Dorsolateral prefrontal cortex (tissue), 120 donors: ENCODE measurements at regions of chr7 and their contacts with region 1.

Region 1: GRCh38 chr7:104983578-104984539 is 30.1 kb upstream of the KMT2E start:
- DNase-seq: peak; percentile 73 to 91 (median 87)
- H3K4me3 ChIP-seq: peak overlapping the region; percentile 56 to 90 (median 75)
- H3K27ac ChIP-seq: peak overlapping the region; percentile 81 to 100 (median 98)
- H3K27me3 ChIP-seq: no peaks in the 10 kb centered on the region
- CTCF ChIP-seq: peak in 55 of 56 donors; percentile 32 to 75 (median 56)

Region 2: DNA sequence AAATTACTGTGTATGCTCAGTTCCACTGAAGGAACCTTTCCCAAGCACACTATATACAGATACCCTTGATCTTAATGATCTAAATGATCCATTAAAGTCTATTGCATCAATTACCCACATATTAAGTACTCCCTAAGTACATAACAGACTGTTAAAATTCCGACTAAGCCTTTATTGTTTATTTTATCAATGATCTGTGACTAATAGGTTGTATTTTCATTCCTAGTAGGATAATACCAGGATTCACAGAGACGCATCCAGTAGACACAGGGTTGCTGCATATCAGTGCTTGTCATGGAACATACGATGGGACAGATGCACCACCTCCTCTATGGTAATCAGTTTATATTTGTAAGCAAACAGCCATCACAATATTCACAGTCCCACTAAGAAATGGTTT is 1378.2 kb before region 1 on chr7:
- intact Hi-C with region 1: no loop called
- DNase-seq: no peak
- H3K4me3 ChIP-seq: no peak overlapping the region
- H3K27ac ChIP-seq: no peak overlapping the region
- H3K27me3 ChIP-seq: peaks cover 0 to 8% (median 0%) of the 10 kb centered on the region in 45 donors
- CTCF ChIP-seq: no peak

Region 3: DNA sequence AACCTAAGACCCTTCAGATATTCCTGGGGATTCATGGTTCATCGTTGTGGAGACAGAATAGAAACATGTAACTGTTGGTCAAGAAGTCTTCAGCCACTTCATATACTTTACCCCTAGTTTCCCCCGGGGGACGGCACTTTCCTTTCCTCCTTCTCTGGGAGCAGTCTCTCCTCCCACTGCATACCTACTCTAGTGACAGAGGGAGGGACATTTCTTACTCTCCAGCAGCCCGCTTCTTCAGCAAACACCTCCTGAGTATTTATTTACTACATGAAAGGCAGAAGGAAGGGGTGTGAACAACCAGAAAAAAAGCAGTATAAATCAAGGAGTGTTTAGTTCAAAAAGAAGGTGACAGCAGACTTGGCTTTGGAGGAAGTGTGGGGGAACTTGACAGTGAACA is 586.4 kb before region 1 on chr7:
- intact Hi-C with region 1: no loop called
- DNase-seq: no peak
- H3K4me3 ChIP-seq: no peak overlapping the region
- H3K27ac ChIP-seq: no peak overlapping the region
- H3K27me3 ChIP-seq: peaks cover 0 to 16% (median 0%) of the 10 kb centered on the region in 45 donors
- CTCF ChIP-seq: no peak

Region 4: GRCh38 chr7:105013221-105013815 is 29.5 kb after region 1 on chr7:
- intact Hi-C with region 1: loop called (anchors 1 kb)
- DNase-seq: peak; percentile 93 to 98 (median 96)
- H3K4me3 ChIP-seq: peak overlapping the region; percentile 69 to 99 (median 92)
- H3K27ac ChIP-seq: peak overlapping the region; percentile 99 to 100 (median 100)
- H3K27me3 ChIP-seq: no peaks in the 10 kb centered on the region
- CTCF ChIP-seq: peak in 42 of 56 donors; percentile 4 to 54 (median 31)

Region 5: GRCh38 chr7:105336009-105336408 is 352.1 kb after region 1 on chr7:
- intact Hi-C with region 1: loop called (anchors 10 kb)
- DNase-seq: no peak
- H3K4me3 ChIP-seq: no peak overlapping the region
- H3K27ac ChIP-seq: peak overlapping the region in 4 of 59 donors; percentile 12 to 29 (median 20)
- H3K27me3 ChIP-seq: no peaks in the 10 kb centered on the region
- CTCF ChIP-seq: peak; percentile 45 to 83 (median 62)

Region 6: DNA sequence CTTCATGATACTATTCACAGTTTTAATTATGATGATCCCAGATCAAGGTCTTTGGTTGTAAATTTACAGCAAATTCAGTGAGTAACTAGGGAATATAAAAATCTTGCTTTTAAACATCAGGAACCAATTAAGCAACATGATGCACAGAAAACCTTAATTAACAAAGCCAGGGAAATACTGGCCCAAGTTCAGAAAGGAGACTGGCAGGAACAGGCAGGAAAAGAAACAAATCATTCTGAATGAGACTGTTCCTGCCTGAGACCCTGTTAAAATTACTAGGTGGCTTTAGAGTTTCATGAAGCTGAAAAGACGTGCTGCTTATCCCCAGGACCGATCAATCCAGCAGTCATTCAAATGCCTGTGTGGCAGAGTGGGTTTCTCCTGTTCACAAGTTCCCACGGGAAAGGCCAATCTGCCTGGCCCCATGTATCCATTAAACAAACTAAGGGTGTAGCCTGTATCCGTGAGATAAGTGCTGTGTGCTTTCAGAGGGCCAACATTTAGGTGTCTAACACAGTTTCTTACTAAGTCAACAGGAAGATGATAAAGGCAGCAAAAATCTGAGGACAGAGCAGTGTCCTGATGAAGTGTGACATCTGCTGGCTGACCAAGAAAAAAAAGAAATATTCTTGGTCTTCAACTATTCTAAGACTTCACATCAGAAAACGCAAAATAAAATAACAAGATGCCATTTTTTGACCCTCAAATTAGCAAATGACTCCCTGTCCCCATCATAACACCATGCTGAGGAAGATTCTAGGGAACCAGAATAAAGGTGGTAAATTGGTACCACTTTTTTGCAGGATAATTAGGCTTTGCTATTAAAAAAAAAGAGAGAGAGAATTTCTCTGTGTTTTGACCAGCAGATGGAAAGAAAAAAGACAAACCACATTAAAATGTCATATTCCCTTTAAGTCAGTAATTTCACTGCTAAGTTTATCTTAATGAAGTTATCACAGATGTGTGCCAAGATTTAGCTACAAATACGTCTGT is 504.0 kb after region 1 on chr7:
- intact Hi-C with region 1: loop called in 1 of 2 experiments (anchors 10 kb)
- DNase-seq: no peak
- H3K4me3 ChIP-seq: no peak overlapping the region
- H3K27ac ChIP-seq: peak overlapping the region in 18 of 59 donors; percentile 7 to 69 (median 30)
- H3K27me3 ChIP-seq: no peaks in the 10 kb centered on the region
- CTCF ChIP-seq: peak in 54 of 56 donors; percentile 34 to 79 (median 59)